ENCODE measurements at regions of chr11 and their contacts with region 1.

Region 1: GRCh38 chr11:92070026-92070889 is 154.4 kb upstream of the FAT3 start:
- DNase-seq: no peak
- ATAC-seq: no peak
- H3K4me3 ChIP-seq: no peak overlapping the region
- H3K27ac ChIP-seq: no peak overlapping the region
- H3K4me1 ChIP-seq: no peaks in the 10 kb centered on the region
- H3K27me3 ChIP-seq: no peaks in the 10 kb centered on the region
- CTCF ChIP-seq: no peak

Region 2: DNA sequence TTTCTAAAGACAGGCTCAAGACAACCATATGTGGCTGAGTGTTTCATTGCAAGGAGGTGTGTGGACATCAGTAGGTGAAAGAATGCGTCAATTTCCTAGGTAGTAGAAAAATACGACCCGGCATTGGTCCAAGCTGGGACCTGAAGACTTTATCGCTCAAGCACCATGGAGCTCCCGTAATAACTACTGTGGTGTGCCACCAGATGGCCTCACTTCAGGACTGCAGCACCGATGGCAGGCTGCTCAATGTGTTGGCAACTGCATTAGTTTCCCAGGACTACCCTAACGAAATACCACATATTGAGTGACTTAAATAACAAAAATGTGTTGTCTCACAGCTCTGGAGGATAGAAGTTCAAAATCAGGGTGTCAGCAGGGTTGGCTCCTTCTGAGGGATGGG is 82.0 kb after region 1 on chr11:
- CTCF ChIA-PET with region 1: no interaction called
- POLR2A ChIA-PET with region 1: interaction called, 12 read pairs
- in situ Hi-C with region 1: no loop called
- intact Hi-C with region 1: no loop called
- DNase-seq: no peak
- ATAC-seq: no peak
- H3K4me3 ChIP-seq: no peak overlapping the region
- H3K27ac ChIP-seq: no peak overlapping the region
- H3K4me1 ChIP-seq: no peaks in the 10 kb centered on the region
- H3K27me3 ChIP-seq: no peaks in the 10 kb centered on the region
- CTCF ChIP-seq: peak; percentile 38

Region 3: DNA sequence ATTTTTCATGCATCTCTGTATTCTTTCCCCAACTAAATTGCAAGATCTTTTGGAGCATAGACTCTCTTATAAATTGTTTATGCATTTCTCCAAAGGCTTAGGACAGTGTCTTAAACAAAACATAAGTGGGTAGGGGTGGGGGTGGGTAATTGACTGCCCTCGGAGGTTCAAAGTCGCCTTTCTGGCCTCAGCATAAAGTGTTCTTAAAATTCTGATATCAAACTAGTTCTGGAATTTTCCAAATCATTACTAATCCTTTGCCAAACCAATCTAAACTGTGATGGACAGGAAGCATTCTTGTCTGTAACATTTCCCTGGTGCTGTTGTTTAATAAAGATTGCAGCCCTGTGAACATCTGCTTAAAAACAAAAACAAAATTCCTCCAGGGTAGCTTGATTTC is 92.5 kb after region 1 on chr11:
- CTCF ChIA-PET with region 1: no interaction called
- POLR2A ChIA-PET with region 1: no interaction called
- in situ Hi-C with region 1: no loop called
- intact Hi-C with region 1: no loop called
- DNase-seq: no peak
- ATAC-seq: no peak
- H3K4me3 ChIP-seq: no peak overlapping the region
- H3K27ac ChIP-seq: no peak overlapping the region
- H3K4me1 ChIP-seq: no peaks in the 10 kb centered on the region
- H3K27me3 ChIP-seq: no peaks in the 10 kb centered on the region
- CTCF ChIP-seq: no peak

Region 4: DNA sequence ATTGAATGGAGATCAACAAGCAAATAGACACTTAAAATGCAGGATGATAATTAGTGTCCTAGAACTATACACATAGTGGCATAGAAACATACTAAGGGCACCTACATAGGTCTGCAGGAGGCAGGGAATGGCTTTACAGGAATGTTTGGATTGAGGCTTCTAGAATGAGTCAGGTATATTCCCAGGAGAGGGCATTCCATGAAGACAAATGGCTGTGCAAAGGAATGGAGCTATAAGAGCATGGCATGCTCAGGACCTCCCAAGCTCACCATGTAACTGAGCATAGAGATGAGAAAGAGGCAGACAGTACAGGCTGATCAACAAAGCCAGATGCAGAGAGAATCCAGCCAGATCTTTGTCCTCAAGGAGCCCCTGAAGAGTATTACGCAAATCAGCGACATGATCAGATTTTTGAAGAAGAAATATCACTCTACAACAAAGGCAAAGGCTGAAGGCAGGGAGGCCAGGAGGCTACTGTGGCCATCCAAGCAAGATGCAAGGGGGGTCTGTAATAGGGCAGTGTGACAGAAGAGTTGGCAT is 688.1 kb after region 1 on chr11:
- CTCF ChIA-PET with region 1: no interaction called
- POLR2A ChIA-PET with region 1: no interaction called
- in situ Hi-C with region 1: no loop called
- intact Hi-C with region 1: no loop called
- DNase-seq: no peak
- ATAC-seq: no peak
- H3K4me3 ChIP-seq: no peak overlapping the region
- H3K27ac ChIP-seq: no peak overlapping the region
- H3K4me1 ChIP-seq: no peaks in the 10 kb centered on the region
- H3K27me3 ChIP-seq: no peaks in the 10 kb centered on the region
- CTCF ChIP-seq: no peak